ENCODE measurements at regions of chr17 and their contacts with region 1.

Region 1: GRCh38 chr17:9971991-9972599 is 67.0 kb upstream of the RCVRN start:
- DNase-seq: no peak
- ATAC-seq: no peak
- H3K4me3 Mint-ChIP-seq: no peak overlapping the region
- H3K27ac Mint-ChIP-seq: no peak overlapping the region
- H3K4me1 Mint-ChIP-seq: peaks cover under 1% of the 10 kb centered on the region
- H3K27me3 Mint-ChIP-seq: no peaks in the 10 kb centered on the region

Region 2: GRCh38 chr17:9890124-9890523 is 82.0 kb before region 1 on chr17:
- CTCF ChIA-PET with region 1: no interaction called
- POLR2A ChIA-PET with region 1: no interaction called
- intact Hi-C with region 1: no loop called
- DNase-seq: peak; percentile 56
- ATAC-seq: peak; percentile 78
- H3K4me3 Mint-ChIP-seq: no peak overlapping the region
- H3K27ac Mint-ChIP-seq: no peak overlapping the region
- H3K4me1 Mint-ChIP-seq: no peaks in the 10 kb centered on the region
- H3K27me3 Mint-ChIP-seq: peaks cover 6% of the 10 kb centered on the region

Region 3: GRCh38 chr17:10631048-10631700 is 659.1 kb after region 1 on chr17:
- CTCF ChIA-PET with region 1: no interaction called
- POLR2A ChIA-PET with region 1: no interaction called
- intact Hi-C with region 1: loop called in 1 of 2 experiments (anchors 10 kb)
- DNase-seq: peak; percentile 45
- ATAC-seq: no peak
- H3K4me3 Mint-ChIP-seq: no peak overlapping the region
- H3K27ac Mint-ChIP-seq: no peak overlapping the region
- H3K4me1 Mint-ChIP-seq: peaks cover 2% of the 10 kb centered on the region
- H3K27me3 Mint-ChIP-seq: no peaks in the 10 kb centered on the region

Measured in activated CD4-positive, alpha-beta T cell treated with anti-CD3 and anti-CD28 coated beads for 36 hours (primary cell).